HEK293T (cell line): ENCODE measurements at regions of chr12 and their contacts with region 1.

Region 1: DNA sequence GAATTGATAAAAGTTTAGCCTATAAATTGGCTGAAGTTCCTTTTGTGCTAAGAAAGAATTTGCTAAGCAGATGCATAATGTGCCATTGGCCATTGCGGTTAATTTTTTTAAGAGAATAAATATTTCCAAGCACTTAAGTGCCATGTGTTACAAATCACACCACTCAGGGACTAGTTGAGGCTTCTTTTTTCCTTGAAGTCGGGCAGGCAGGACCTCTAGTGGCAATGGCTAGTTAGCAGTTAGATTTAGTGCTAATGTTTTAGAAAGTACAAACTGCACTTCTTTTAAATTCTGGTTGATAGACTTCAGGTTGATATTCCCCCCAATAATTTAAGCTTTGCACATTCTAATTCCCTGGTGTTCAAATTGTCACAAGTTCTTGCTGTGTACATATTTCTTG is 294.3 kb downstream of the APAF1 start:
- DNase-seq: peak; percentile 21

Region 2: GRCh38 chr12:98951406-98951805 is 12.1 kb after region 1 on chr12:
- CTCF ChIA-PET with region 1: interaction called, 14 read pairs
- POLR2A ChIA-PET with region 1: no interaction called
- DNase-seq: no peak